Activated B cell treated with CpG ODN at 0.5 μM for 24 hours (primary cell): ENCODE measurements at regions of chr9 and their contacts with region 1.

Region 1: DNA sequence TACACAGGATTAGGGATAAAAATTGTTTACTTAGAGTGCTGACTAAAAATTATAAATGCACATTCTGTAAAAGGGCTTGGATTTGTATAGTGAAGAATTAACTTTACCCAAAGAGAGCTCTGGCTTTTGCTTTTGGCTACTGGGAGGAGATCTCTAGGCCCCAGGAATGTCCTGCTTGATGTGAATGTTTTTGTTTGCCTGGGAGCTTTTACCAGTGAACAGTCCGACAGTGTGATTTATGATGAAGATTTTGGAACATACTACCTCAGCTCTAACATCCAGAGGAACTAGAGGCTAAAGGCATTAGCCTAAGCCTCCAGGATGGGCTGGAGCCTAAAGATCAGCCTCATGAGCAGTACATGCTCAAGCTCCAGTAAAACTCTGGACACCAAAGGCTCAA is 103.7 kb upstream of the RFX3 start:
- DNase-seq: no peak
- ATAC-seq: no peak
- H3K4me3 Mint-ChIP-seq: no peak overlapping the region
- H3K27ac Mint-ChIP-seq: no peak overlapping the region
- H3K4me1 Mint-ChIP-seq: no peaks in the 10 kb centered on the region
- H3K27me3 Mint-ChIP-seq: no peaks in the 10 kb centered on the region
- CTCF ChIP-seq: no peak

Region 2: DNA sequence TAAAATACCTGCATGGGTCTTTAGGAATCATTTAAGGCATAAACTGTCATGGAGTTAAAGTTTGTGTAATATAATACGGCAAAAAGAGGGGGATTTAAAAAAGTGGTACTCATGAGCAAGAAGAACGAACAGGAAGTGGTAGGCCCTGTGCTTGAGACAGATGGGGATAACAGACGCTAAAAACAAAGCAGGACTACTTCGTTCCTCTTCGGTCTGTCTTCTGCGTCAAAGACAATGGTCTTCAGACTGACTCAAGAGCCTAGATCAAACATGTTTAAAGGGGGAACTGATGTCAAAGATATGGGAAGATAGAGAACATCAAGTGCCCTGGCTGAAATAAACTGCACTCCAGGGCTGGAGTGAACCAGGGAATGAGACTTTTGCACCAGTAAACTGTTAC is 43.9 kb before region 1 on chr9:
- CTCF ChIA-PET with region 1: no interaction called
- POLR2A ChIA-PET with region 1: no interaction called
- intact Hi-C with region 1: no loop called
- DNase-seq: no peak
- ATAC-seq: no peak
- H3K4me3 Mint-ChIP-seq: no peak overlapping the region
- H3K27ac Mint-ChIP-seq: no peak overlapping the region
- H3K4me1 Mint-ChIP-seq: no peaks in the 10 kb centered on the region
- H3K27me3 Mint-ChIP-seq: no peaks in the 10 kb centered on the region
- CTCF ChIP-seq: no peak

Region 3: GRCh38 chr9:3647652-3648051 is 18.2 kb after region 1 on chr9:
- CTCF ChIA-PET with region 1: no interaction called
- POLR2A ChIA-PET with region 1: no interaction called
- intact Hi-C with region 1: loop called (anchors 2 kb)
- DNase-seq: no peak
- ATAC-seq: no peak
- H3K4me3 Mint-ChIP-seq: no peak overlapping the region
- H3K27ac Mint-ChIP-seq: no peak overlapping the region
- H3K4me1 Mint-ChIP-seq: no peaks in the 10 kb centered on the region
- H3K27me3 Mint-ChIP-seq: no peaks in the 10 kb centered on the region
- CTCF ChIP-seq: no peak

Region 4: GRCh38 chr9:4939118-4939561 is 1309.6 kb after region 1 on chr9:
- CTCF ChIA-PET with region 1: no interaction called
- POLR2A ChIA-PET with region 1: no interaction called
- intact Hi-C with region 1: no loop called
- DNase-seq: no peak
- ATAC-seq: peak; percentile 92
- H3K4me3 Mint-ChIP-seq: peak overlapping the region; percentile 42
- H3K27ac Mint-ChIP-seq: peak overlapping the region; percentile 79
- H3K4me1 Mint-ChIP-seq: peaks cover 60% of the 10 kb centered on the region
- H3K27me3 Mint-ChIP-seq: no peaks in the 10 kb centered on the region
- CTCF ChIP-seq: no peak